Aorta (tissue), 5 donors: ENCODE measurements at regions of chr10 and their contacts with region 1.

Region 1: GRCh38 chr10:15485684-15486316 is 114.7 kb upstream of the FAM171A1 start:
- DNase-seq: peak in 1 of 2 donors; percentile 86
- ATAC-seq: peak; percentile 91
- H3K4me3 ChIP-seq: no peak overlapping the region
- H3K27ac ChIP-seq: peak overlapping the region; percentile 90 to 95
- H3K4me1 ChIP-seq: peaks cover 5 to 6% of the 10 kb centered on the region in 2 donors
- H3K27me3 ChIP-seq: no peaks in the 10 kb centered on the region

Region 2: DNA sequence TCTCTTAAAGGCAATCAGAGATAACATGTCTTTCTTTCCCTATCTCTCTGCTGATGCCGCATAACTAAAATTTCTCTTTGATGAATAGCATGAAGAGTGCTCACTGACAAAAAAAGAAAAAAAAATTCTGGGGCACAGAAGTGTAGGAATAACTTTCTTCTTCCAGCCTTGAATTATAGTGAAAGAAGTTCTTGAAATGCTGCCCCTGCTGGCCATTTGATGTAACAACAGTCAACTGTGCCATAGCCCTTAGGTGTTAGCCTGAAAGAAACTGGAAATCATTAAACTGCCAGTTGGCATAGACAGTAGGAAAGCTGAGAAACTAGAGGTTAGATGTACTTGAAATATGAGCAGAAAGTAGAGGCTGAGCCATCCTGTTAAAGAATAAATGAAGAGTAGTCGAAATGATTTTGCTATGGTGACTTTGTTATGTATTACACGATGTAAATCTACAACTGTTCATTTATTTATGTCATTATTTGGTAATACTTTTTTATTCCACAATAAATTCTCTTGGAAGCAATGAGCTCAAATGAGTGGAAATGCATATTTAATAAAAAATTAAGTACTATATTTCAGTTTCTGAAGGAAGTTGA is 66.4 kb before region 1 on chr10:
- intact Hi-C with region 1: no loop called
- DNase-seq: no peak
- ATAC-seq: peak; percentile 66
- H3K4me3 ChIP-seq: no peak overlapping the region
- H3K27ac ChIP-seq: no peak overlapping the region
- H3K4me1 ChIP-seq: no peaks in the 10 kb centered on the region
- H3K27me3 ChIP-seq: no peaks in the 10 kb centered on the region

Region 3: DNA sequence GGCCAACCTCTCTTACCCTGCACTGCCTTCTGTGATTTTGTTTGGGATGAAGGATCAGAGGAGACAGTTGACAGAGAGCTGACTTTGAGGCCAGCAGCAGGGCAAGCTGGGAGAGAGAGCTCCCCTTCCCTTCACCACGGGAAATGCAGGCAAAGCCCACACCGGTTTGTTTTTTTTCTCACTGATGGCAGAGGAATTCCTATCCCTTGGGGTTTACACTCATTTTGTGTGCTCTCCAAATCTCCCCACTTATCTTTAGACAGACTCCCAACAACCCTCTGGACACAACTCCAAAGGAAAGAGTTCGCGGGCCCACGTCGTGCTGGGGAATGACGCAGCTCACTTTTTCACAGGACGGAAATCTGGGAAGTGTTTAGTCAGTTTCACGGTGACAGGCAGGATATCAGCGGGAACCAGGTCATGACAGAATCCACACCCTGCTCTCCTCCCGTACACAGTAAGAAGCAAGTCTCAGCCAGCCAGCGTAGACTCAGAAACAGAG is 46.4 kb before region 1 on chr10:
- intact Hi-C with region 1: loop called (anchors 2 to 5 kb)
- DNase-seq: peak; percentile 79 to 87
- ATAC-seq: peak; percentile 78
- H3K4me3 ChIP-seq: no peak overlapping the region
- H3K27ac ChIP-seq: peak overlapping the region; percentile 52 to 84
- H3K4me1 ChIP-seq: peaks cover 0 to 2% of the 10 kb centered on the region in 2 donors
- H3K27me3 ChIP-seq: no peaks in the 10 kb centered on the region

Region 4: DNA sequence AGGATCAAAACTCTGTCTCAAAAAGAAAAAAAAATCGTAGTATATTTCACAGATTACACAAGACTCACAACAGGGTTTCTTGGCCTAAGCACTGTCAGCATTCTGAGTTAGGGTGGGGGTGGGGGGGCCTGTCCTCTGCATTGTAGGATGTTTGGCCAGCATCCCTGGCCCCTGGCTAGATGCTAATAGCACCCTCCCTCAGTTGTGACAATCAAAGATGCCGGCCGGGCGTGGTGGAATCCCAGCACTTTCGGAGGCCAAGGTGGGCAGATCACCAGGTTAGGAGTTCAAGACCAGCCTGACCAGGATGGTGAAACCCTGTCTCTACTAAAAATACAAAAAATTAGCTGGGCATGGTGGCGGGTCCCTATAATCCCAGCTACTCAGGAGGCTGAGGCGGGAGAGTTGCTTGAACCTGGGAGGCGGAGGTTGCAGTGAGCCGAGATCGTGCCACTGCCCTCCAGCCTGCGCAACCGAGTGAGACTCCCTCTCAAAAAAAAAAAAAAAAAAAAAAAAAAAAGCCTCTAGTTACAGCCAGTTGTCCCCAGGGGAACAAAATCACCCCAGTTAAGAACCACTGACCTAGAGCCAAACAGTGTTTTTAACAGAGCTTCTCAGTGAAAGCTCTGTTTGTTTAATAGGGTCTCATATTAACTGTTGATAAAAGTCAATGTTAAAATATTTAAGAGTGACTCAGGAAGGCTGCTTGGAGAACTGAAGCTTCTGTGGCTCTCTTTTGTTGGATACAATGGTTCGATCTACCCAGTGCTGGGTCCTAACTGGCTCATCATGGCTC is 46.3 kb after region 1 on chr10:
- intact Hi-C with region 1: loop called (anchors 2 to 5 kb)
- DNase-seq: no peak
- ATAC-seq: peak; percentile 47
- H3K4me3 ChIP-seq: no peak overlapping the region
- H3K27ac ChIP-seq: peak overlapping the region; percentile 34 to 50
- H3K4me1 ChIP-seq: peaks cover 0 to 2% of the 10 kb centered on the region in 2 donors
- H3K27me3 ChIP-seq: no peaks in the 10 kb centered on the region

Region 5: GRCh38 chr10:15571575-15571974 is 85.8 kb after region 1 on chr10:
- intact Hi-C with region 1: loop called in 1 of 2 experiments (anchors 5 kb)
- DNase-seq: peak in 1 of 2 donors; percentile 71
- ATAC-seq: no peak
- H3K4me3 ChIP-seq: no peak overlapping the region
- H3K27ac ChIP-seq: peak overlapping the region; percentile 69 to 90
- H3K4me1 ChIP-seq: peaks cover 3 to 7% of the 10 kb centered on the region in 2 donors
- H3K27me3 ChIP-seq: no peaks in the 10 kb centered on the region

Region 6: GRCh38 chr10:15624401-15625196 is 138.8 kb after region 1 on chr10:
- intact Hi-C with region 1: loop called in 1 of 2 experiments (anchors 5 kb)
- DNase-seq: peak in 1 of 2 donors; percentile 53
- ATAC-seq: peak; percentile 67
- H3K4me3 ChIP-seq: no peak overlapping the region
- H3K27ac ChIP-seq: peak overlapping the region in 1 of 2 donors; percentile 96
- H3K4me1 ChIP-seq: peaks cover 11 to 12% of the 10 kb centered on the region in 2 donors
- H3K27me3 ChIP-seq: no peaks in the 10 kb centered on the region

Region 7: GRCh38 chr10:15789793-15790525 is 304.2 kb after region 1 on chr10:
- intact Hi-C with region 1: loop called in 1 of 2 experiments (anchors 10 kb)
- DNase-seq: no peak
- ATAC-seq: peak; percentile 36
- H3K4me3 ChIP-seq: no peak overlapping the region
- H3K27ac ChIP-seq: peak overlapping the region; percentile 55 to 96
- H3K4me1 ChIP-seq: peaks cover 6 to 10% of the 10 kb centered on the region in 2 donors
- H3K27me3 ChIP-seq: no peaks in the 10 kb centered on the region